PC-3 (cell line): ENCODE measurements at regions of chr2 and their contacts with region 1.

Region 1: DNA sequence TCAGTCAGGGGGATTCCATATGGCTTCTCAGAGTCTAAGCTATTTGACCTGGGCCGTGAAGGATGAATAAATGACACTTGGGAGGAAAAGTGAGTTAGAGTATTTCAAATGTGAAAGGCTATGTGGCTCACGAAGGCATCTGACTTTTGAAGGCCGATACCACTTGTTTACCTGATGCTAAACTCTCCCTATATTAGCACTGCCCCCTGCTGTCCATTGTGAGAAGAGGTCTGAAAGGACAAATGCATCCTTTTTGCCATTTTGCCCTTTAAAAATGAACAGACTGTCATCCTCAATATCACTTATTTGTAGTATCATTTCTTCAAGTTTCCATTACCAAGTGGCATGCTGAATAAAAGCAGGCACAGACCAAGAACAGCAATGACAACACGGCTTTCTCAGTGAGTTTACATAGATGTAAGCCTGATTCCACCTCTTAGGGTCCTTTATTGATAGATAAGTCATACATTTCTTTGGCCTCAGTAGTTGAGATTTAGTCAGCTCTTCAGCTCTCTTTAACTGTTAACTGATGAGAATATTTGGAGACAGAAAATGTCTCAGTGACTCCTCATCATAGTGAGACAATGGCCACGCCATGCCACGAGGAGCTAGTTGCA is 40.1 kb downstream of the DOCK10 start:
- DNase-seq: peak; percentile 79
- ATAC-seq: peak; percentile 81
- H3K4me3 ChIP-seq: no peak overlapping the region
- H3K27ac ChIP-seq: no peak overlapping the region
- H3K4me1 ChIP-seq: no peaks in the 10 kb centered on the region
- H3K27me3 ChIP-seq: no peaks in the 10 kb centered on the region
- CTCF ChIP-seq: peak; percentile 80

Region 2: GRCh38 chr2:224357098-224357901 is 644.8 kb before region 1 on chr2:
- CTCF ChIA-PET with region 1: interaction called, 4 read pairs
- POLR2A ChIA-PET with region 1: no interaction called
- intact Hi-C with region 1: loop called (anchors 10 kb)
- DNase-seq: peak; percentile 75
- ATAC-seq: peak; percentile 47
- H3K4me3 ChIP-seq: no peak overlapping the region
- H3K27ac ChIP-seq: no peak overlapping the region
- H3K4me1 ChIP-seq: peaks cover 16% of the 10 kb centered on the region
- H3K27me3 ChIP-seq: no peaks in the 10 kb centered on the region; the same call in 1 of the 2 replicates
- CTCF ChIP-seq: peak; percentile 87

Region 3: DNA sequence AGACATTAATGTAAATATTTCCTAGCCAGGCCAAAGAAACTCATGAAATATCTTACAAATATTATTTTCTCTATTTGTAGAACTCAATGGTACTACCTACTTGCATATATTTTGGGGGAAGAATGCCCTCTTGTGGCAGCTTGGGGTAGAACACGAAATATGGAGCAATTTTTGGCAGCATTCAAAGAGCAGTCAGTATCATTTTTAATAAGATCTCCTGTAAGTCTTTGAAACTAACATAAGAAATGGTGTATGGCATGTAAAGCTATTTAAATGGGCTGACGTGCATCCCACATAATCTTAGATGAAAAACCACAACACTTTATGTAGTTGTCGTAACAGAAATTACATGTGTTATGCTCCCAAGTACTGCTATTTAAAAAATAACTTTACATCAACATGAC is 223.7 kb before region 1 on chr2:
- CTCF ChIA-PET with region 1: no interaction called
- POLR2A ChIA-PET with region 1: no interaction called
- intact Hi-C with region 1: loop called (anchors 1 kb)
- DNase-seq: peak; percentile 77
- ATAC-seq: peak; percentile 73
- H3K4me3 ChIP-seq: no peak overlapping the region
- H3K27ac ChIP-seq: no peak overlapping the region
- H3K4me1 ChIP-seq: no peaks in the 10 kb centered on the region
- H3K27me3 ChIP-seq: no peaks in the 10 kb centered on the region
- CTCF ChIP-seq: peak; percentile 89

Region 4: GRCh38 chr2:224807153-224807964 is 194.8 kb before region 1 on chr2:
- CTCF ChIA-PET with region 1: no interaction called
- POLR2A ChIA-PET with region 1: no interaction called
- intact Hi-C with region 1: loop called (anchors 2 kb)
- DNase-seq: peak; percentile 28
- ATAC-seq: no peak
- H3K4me3 ChIP-seq: no peak overlapping the region
- H3K27ac ChIP-seq: no peak overlapping the region
- H3K4me1 ChIP-seq: no peaks in the 10 kb centered on the region
- H3K27me3 ChIP-seq: no peaks in the 10 kb centered on the region
- CTCF ChIP-seq: peak; percentile 42; the same call in 1 of the 2 replicates

Region 5: DNA sequence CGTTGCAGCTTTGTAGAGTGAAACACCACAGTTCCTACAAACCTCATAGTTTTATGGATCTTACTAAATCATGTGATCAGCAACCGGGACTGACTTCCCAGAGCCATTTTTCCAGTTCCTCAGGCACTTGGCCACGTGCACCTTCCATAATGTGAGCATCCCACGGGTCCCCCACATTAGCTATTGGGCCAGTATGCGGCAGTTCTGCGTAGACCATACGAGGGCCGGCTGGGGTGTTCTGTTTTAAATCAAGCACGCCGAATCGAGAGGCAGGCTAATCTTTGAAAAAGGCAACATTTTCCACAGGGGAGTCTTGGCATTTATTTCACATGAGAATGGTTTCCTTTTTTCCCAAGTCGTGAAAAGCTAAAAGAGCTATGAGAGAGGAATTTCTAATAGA is 150.3 kb before region 1 on chr2:
- CTCF ChIA-PET with region 1: no interaction called
- POLR2A ChIA-PET with region 1: interaction called, 18 read pairs
- intact Hi-C with region 1: no loop called
- DNase-seq: no peak
- ATAC-seq: no peak
- H3K4me3 ChIP-seq: no peak overlapping the region
- H3K27ac ChIP-seq: no peak overlapping the region
- H3K4me1 ChIP-seq: 0 out of 2 replicates have a peak, but pooled peaks cover 3% of the 10 kb centered on the region
- H3K27me3 ChIP-seq: no peaks in the 10 kb centered on the region
- CTCF ChIP-seq: no peak

Region 6: DNA sequence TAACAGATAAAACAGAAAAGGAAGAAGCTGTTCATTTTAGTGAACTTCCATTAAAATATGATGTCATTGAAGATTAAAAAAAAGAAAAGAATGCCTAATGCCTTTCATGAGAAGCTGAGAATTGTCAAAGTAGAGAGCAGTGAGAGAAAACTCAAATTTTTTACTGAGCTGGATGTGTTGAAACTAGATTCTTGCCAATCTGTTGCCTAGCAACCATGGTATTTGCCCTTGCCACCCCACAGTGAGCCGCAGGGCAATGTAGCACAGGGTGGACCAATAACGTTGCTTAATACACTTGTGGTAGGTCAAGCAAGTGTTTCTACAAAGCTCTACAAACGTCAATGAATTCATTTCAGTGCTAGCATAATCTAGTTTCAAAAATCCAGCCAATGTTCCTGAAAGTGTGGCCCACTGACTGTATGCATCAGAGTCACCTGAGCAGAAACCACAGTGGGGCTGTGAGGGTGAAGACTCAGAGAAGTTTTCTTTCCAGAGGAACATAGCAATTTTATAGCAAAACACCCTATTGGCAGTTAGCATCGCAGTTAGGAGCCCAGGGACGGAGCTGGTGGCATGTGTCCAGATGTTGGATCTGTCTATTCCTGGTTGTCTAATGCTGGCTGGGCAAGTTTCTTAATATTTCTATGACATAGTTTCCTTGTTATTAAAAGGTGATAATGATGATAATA is 92.1 kb before region 1 on chr2:
- CTCF ChIA-PET with region 1: no interaction called
- POLR2A ChIA-PET with region 1: no interaction called
- intact Hi-C with region 1: no loop called
- DNase-seq: no peak
- ATAC-seq: no peak
- H3K4me3 ChIP-seq: no peak overlapping the region
- H3K27ac ChIP-seq: no peak overlapping the region
- H3K4me1 ChIP-seq: no peaks in the 10 kb centered on the region
- H3K27me3 ChIP-seq: no peaks in the 10 kb centered on the region
- CTCF ChIP-seq: no peak

Region 7: DNA sequence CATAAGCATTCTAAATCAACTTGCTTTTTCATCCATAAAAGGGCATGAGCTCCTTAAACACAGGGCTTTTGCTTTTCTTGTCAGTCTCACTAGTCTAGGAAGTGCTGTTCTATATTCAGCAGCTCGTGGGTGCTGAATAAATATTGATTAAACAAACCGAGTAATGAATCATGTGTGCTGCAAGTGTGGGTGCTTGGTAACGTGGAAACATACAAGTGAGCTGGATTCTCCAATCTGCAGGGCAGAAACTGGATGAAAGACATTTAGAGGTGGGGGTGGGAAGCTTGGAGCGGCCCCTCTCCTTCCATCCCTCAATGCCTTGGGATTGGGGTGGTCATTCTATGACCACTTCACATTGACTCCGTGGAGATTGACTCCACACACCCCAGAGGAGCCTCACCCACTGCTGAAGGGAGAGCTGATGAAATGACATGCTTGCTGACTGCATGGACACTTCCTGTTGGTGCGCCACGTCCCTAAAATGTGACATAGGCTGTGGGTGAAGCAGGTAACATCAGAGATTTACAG is 74.4 kb before region 1 on chr2:
- CTCF ChIA-PET with region 1: interaction called, 9 read pairs
- POLR2A ChIA-PET with region 1: interaction called, 8 read pairs
- intact Hi-C with region 1: loop called (anchors 1 kb)
- DNase-seq: peak; percentile 70
- ATAC-seq: peak; percentile 82
- H3K4me3 ChIP-seq: no peak overlapping the region
- H3K27ac ChIP-seq: peak overlapping the region; percentile 72
- H3K4me1 ChIP-seq: peaks cover 31% of the 10 kb centered on the region
- H3K27me3 ChIP-seq: no peaks in the 10 kb centered on the region
- CTCF ChIP-seq: no peak

Region 8: DNA sequence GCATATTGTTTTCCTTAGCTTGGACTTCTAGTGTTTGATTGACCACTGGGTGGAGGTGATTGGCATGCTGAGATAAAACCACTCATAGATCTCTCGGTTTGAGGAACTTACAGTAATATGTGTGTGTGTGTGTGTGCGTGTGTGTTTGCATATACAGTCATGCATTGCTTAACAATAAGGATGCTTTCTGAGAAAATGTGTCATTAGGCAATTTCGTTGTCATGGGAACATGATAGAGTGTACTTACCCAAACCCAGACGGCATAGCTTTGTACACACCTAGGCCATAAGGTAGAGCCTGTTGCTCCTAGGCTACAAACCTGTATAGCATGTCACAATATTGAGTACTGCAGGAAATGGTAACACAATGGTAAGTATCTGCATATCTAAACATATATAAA is 564.7 kb after region 1 on chr2:
- CTCF ChIA-PET with region 1: no interaction called
- POLR2A ChIA-PET with region 1: no interaction called
- intact Hi-C with region 1: no loop called
- DNase-seq: peak; percentile 26
- ATAC-seq: no peak
- H3K4me3 ChIP-seq: no peak overlapping the region
- H3K27ac ChIP-seq: no peak overlapping the region
- H3K4me1 ChIP-seq: no peaks in the 10 kb centered on the region
- H3K27me3 ChIP-seq: peaks cover 28% of the 10 kb centered on the region
- CTCF ChIP-seq: no peak

Region 9: DNA sequence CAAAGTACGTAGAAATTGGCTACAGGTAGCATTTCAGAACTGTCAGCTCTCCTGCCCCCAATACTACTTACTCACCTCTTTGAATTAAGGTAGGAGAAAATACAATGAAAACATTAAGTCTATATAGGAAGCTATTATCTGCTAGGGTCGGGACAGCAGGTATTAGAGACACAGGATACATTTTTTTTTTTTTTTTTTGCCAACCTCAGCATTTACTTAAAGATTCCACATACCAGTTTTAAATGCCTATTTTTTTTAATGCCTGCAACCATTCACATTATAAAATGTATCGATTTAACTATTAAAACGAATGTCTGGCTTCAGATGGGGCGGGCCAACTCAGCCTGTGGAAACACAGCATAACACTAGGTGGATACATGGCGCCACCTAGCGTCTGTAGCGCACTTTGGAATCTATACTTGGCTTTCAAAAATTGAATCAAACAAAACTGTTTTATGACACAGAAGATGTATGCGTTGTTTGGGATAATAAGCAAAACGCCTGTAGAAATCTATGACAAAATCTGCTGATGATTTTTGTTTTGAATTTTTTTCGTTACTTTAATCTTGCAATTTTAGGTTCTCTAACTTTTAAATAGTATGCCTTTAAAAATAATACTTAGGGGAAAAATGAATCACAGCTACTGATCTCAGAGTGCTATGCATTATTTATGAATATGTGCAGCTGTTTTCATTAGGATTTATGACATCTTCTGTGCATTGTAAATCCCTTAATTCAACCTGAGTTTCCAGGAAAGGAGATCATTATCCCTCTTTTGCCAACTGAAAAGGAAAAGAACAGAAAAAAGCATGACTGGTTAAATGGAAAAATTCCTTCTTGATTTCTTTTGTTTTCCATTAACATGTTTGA is 658.4 kb after region 1 on chr2:
- CTCF ChIA-PET with region 1: no interaction called
- POLR2A ChIA-PET with region 1: no interaction called
- intact Hi-C with region 1: loop called (anchors 1 kb)
- DNase-seq: peak; percentile 84
- ATAC-seq: peak; percentile 89
- H3K4me3 ChIP-seq: no peak overlapping the region
- H3K27ac ChIP-seq: no peak overlapping the region
- H3K4me1 ChIP-seq: no peaks in the 10 kb centered on the region
- H3K27me3 ChIP-seq: no peaks in the 10 kb centered on the region
- CTCF ChIP-seq: peak; percentile 92